ENCODE measurements at regions of chr20 and their contacts with region 1.

Region 1: DNA sequence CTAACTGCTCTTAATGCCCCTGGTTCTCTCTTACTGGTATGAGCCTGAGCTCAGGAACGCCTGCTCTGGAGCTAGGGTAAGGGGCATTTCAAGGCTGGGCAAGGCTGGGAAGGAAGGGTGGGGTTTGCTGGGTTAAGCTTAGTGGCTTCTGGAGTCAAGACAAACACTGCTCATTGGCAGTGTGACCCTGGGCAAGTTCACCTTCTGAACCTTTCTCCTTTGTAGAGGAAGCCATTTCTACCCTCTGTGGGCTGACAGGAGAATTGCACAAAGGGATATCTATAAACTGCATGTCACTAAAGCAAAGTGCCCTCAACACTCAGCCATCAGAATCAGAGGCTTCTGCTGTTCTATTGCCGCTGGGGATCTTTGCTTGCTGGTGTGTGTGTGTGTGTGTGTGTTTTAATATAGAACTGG is 20.3 kb upstream of the LRRN4 start:
- DNase-seq: peak; percentile 88
- ATAC-seq: peak; percentile 99
- H3K4me3 ChIP-seq: no peak overlapping the region
- H3K27ac ChIP-seq: peak overlapping the region; percentile 37
- H3K4me1 ChIP-seq: peaks cover 34% of the 10 kb centered on the region
- H3K27me3 ChIP-seq: no peaks in the 10 kb centered on the region; a peak in 1 of 5 replicates
- CTCF ChIP-seq: peak; percentile 80
- EP300 ChIP-seq: no peak
- POLR2A ChIP-seq: no peak
- RAD21 ChIP-seq: peak; percentile 75; the same call in 1 of the 2 replicates

Region 2: GRCh38 chr20:5090191-5090590 is 984.0 kb before region 1 on chr20:
- CTCF ChIA-PET with region 1: no interaction called
- POLR2A ChIA-PET with region 1: no interaction called
- in situ Hi-C with region 1: no loop called
- intact Hi-C with region 1: no loop called
- DNase-seq: no peak
- ATAC-seq: no peak
- H3K4me3 ChIP-seq: no peak overlapping the region
- H3K27ac ChIP-seq: no peak overlapping the region
- H3K4me1 ChIP-seq: no peaks in the 10 kb centered on the region
- H3K27me3 ChIP-seq: no peaks in the 10 kb centered on the region
- CTCF ChIP-seq: no peak
- EP300 ChIP-seq: no peak
- POLR2A ChIP-seq: no peak
- RAD21 ChIP-seq: no peak

Region 3: GRCh38 chr20:5557123-5557522 is 517.0 kb before region 1 on chr20:
- CTCF ChIA-PET with region 1: interaction called, 3 read pairs
- POLR2A ChIA-PET with region 1: no interaction called
- in situ Hi-C with region 1: no loop called
- intact Hi-C with region 1: loop called (anchors 1 kb)
- DNase-seq: peak; percentile 61
- ATAC-seq: peak; percentile 98
- H3K4me3 ChIP-seq: no peak overlapping the region
- H3K27ac ChIP-seq: no peak overlapping the region
- H3K4me1 ChIP-seq: no peaks in the 10 kb centered on the region
- H3K27me3 ChIP-seq: no peaks in the 10 kb centered on the region
- CTCF ChIP-seq: peak; percentile 87
- EP300 ChIP-seq: no peak
- POLR2A ChIP-seq: no peak
- RAD21 ChIP-seq: peak; percentile 88

Region 4: DNA sequence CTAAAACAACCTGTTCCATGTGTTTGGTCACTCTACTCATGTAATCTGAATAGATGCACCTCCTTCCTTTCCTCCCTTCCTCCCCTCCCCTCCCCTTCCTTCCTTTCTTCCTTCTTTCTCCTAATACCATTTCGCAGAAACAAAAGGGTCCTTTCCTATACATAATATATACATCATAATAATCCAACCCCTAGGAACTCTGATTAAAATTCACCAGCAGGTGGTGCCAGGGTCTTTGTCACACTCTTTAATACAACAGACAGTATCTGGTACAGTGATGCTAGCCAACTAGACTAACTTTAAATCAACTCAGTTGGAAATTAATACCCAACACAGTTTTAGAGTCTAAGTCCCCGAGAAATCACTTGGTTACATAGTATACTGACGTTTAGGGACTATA is 505.1 kb before region 1 on chr20:
- CTCF ChIA-PET with region 1: no interaction called
- POLR2A ChIA-PET with region 1: no interaction called
- in situ Hi-C with region 1: no loop called
- intact Hi-C with region 1: loop called (anchors 1 kb)
- DNase-seq: peak; percentile 71
- ATAC-seq: peak; percentile 94
- H3K4me3 ChIP-seq: no peak overlapping the region
- H3K27ac ChIP-seq: no peak overlapping the region
- H3K4me1 ChIP-seq: no peaks in the 10 kb centered on the region
- H3K27me3 ChIP-seq: no peaks in the 10 kb centered on the region
- CTCF ChIP-seq: peak; percentile 73
- EP300 ChIP-seq: no peak
- POLR2A ChIP-seq: no peak
- RAD21 ChIP-seq: peak; percentile 69

Region 5: DNA sequence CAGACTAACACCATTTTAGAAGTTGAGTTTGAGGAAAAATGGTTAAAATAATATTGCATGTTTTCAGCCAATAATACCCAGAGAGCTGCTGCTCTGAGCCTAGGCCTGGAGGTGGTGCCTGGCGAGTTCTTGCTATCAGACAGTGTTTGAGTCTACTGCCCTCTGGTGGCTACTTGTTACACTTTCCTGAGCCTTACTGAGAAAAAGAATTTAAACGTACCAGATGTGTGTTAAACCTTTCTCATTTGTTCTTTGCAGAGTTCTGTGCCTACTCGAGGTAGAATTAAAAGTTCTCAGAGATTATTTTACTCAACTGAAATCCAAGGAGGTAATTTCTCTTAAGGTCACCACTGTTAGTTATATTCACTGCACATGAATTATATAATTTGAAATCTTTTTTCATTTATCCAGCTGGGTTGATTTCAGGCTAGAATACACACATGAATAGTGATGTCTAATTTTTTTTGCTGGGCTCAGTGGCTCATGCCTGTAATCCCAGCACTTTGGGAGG is 285.7 kb before region 1 on chr20:
- CTCF ChIA-PET with region 1: interaction called, 5 read pairs
- POLR2A ChIA-PET with region 1: no interaction called
- in situ Hi-C with region 1: no loop called
- intact Hi-C with region 1: loop called (anchors 10 kb)
- DNase-seq: peak; percentile 94
- ATAC-seq: peak; percentile 99
- H3K4me3 ChIP-seq: no peak overlapping the region
- H3K27ac ChIP-seq: no peak overlapping the region
- H3K4me1 ChIP-seq: peaks cover 33% of the 10 kb centered on the region
- H3K27me3 ChIP-seq: no peaks in the 10 kb centered on the region
- CTCF ChIP-seq: peak; percentile 95
- EP300 ChIP-seq: no peak
- POLR2A ChIP-seq: no peak
- RAD21 ChIP-seq: peak; percentile 98

Region 6: DNA sequence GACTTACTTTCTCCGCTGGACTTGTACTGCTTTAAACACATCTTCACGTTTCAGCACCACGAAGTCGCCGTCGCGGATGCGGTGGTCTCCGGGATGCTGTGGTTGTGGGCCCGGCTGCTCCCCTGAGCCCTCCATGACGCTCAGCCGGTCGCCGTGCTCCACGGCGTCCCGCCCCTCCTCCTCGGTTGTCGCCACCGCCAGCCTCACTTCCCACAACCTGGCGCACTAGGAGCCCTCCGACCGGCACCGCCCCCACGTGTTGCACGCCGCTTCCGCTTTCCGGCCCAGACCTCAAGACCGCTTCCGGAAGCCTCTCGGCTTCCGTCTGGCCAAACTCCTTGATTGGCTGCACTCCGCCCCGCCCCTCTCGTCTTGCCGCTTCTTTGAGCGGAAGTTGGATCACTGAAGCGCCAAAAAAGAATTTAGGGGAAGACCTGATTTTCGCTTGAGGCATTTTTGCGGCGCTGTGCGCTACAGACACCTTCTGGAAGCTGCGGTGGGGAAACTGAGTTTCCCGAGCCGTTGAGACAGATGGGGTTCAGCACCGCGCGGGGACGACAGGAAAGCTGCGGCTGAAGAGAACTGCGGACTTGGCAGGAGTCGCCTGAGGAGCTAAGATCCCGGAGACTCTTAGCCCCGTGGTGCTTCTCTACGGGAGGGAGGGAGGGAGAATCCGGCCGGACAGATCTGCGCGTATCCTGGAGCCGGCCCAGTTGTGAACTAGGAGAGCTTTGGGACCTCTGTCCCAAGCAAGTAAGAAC is 123.7 kb before region 1 on chr20 and contains the starts of genes MCM8 and TRMT6:
- CTCF ChIA-PET with region 1: no interaction called
- POLR2A ChIA-PET with region 1: no interaction called
- in situ Hi-C with region 1: no loop called
- intact Hi-C with region 1: loop called (anchors 1 kb)
- DNase-seq: peak; percentile 99
- ATAC-seq: peak; percentile 99
- H3K4me3 ChIP-seq: peak within 1 kb of the TSS; percentile 67 to 85 (median 83)
- H3K27ac ChIP-seq: peak within 1 kb of the TSS; percentile 82
- H3K4me1 ChIP-seq: peaks cover 36% of the 10 kb centered on the region
- H3K27me3 ChIP-seq: no peaks in the 10 kb centered on the region; a peak in 1 of 5 replicates
- CTCF ChIP-seq: peak; percentile 56
- EP300 ChIP-seq: peak in 1 of 2 experiments; percentile 34; a peak in 1 of 4 replicates
- POLR2A ChIP-seq: peak; percentile 86 to 92; a peak in 3 of 4 replicates
- RAD21 ChIP-seq: peak; percentile 60
- total RNA-seq, gene MCM8: 59.3 and 91.2 TPM in 2 replicates
- total RNA-seq, gene TRMT6: 37.8 and 51.1 TPM in 2 replicates

Region 7: DNA sequence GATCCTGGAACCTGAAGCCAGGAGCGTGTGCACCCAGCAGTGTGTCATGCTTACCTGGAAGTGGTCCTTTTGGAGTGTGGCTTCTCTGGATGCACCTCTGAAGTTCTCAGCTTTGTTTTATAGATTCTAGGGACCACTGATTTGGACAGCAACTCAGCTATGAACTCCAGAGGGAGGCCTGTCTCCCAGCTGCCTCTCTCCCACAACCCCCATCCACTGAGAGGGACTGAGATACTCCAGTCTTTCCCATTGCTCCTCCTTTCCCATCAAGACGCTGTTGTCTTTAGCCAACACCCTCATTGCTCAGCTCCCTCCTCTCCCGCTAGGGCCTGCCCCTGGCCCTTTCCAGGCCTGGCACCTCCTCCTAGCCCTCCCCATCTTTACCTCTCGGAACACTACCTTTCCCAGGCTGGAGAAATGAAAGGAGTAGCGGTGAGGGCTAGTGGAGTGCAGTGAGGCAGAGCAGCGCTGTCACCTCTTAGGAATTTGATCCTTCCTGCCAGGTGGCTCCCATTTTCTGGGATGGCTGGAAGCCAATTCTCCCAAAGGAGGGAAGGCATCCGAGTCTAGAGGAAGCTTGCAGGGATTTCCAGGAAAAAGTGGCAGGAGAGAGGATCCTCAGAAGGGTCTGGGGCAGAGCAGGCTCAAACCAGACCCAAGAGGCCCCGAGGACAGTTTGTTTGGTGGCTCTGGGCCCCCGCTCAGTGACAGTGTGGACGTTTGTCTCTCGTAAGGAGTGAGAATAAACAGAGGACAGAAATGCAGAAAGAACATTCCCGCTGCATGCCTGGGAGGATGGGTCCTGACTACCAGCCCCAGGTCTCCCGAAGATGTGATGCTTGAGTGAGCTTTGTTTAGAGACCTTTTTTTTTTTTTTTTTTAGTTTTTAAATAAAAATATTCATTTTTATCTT is 20.1 kb before region 1 on chr20 and contains the start of gene LRRN4:
- CTCF ChIA-PET with region 1: no interaction called
- POLR2A ChIA-PET with region 1: no interaction called
- in situ Hi-C with region 1: no loop called
- intact Hi-C with region 1: loop called (anchors 1 kb)
- DNase-seq: peak; percentile 34
- ATAC-seq: peak; percentile 58
- H3K4me3 ChIP-seq: peak within 1 kb of the TSS; percentile 42 to 65 (median 59)
- H3K27ac ChIP-seq: no peak within 1 kb of the TSS
- H3K4me1 ChIP-seq: peaks cover 49% of the 10 kb centered on the region
- H3K27me3 ChIP-seq: peaks cover 1 to 8% of the 10 kb centered on the region in 2 experiments; a peak in 1 of 5 replicates
- CTCF ChIP-seq: 0 out of 2 replicates have a peak, but pooled peaks have one; percentile 3
- EP300 ChIP-seq: no peak
- POLR2A ChIP-seq: no peak
- RAD21 ChIP-seq: no peak
- total RNA-seq, gene LRRN4: 0.20 and 0.25 TPM in 2 replicates